HepG2 (cell line): ENCODE measurements at regions of chr3 and their contacts with region 1.

Region 1: DNA sequence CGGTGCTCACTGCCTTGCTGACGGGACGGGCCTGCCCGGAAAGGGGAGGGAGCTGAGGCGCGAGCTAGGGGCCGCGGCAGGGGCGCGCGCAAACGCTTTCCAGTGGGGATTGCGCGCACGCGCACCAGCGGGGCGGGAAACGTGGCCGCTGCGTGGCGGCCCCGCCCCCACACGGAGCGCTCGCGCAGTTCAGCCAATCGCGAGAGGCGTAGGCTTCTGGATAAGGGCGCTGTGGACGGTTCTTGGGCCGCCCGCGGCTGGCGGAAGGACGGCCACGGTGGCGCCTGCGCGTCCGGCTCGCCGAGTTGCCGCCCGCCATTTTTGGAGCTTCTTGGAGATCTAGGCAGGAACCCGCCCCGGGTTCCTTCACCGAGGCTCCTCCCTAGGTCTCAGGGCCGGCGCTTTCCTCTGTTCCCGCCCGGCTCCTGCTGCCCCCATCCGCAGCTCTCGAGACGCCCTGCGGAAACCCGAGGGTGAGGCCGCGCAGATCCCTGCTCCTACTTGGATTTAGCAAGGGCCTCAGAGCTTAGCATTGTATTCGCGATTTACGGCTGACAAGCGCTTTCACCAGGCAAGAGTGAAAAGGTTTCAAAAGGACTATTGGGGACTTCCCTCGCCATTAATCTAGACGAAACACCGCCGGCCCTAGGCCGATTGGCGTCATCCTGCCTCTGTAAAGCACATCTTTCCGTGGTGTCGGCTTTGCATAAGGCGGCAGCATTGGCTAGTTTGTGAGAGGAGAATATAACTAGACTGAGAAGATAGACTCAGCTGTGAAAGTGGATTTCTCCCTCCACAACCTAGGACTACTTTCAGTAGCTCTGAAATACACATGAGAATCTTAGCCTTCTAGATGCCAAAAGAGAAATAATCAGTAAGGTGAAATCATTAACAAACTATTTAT is 496 bp upstream of the STAG1 start:
- DNase-seq: peak; percentile 93
- ATAC-seq: peak; percentile 94
- H3K4me3 ChIP-seq: peak overlapping the region; percentile 61 to 86 (median 81)
- H3K27ac ChIP-seq: peak overlapping the region; percentile 97
- H3K4me1 ChIP-seq: peaks cover 31% of the 10 kb centered on the region
- H3K27me3 ChIP-seq: no peaks in the 10 kb centered on the region
- CTCF ChIP-seq: 0 out of 2 replicates have a peak, but pooled peaks have one; percentile 44
- EP300 ChIP-seq: 0 out of 4 replicates have a peak, but pooled peaks of 1 of the 2 experiments have one; percentile 7
- POLR2A ChIP-seq: peak; percentile 73 to 95; a peak in 3 of 4 replicates
- RAD21 ChIP-seq: no peak; the same call in 1 of the 2 replicates

Region 2: DNA sequence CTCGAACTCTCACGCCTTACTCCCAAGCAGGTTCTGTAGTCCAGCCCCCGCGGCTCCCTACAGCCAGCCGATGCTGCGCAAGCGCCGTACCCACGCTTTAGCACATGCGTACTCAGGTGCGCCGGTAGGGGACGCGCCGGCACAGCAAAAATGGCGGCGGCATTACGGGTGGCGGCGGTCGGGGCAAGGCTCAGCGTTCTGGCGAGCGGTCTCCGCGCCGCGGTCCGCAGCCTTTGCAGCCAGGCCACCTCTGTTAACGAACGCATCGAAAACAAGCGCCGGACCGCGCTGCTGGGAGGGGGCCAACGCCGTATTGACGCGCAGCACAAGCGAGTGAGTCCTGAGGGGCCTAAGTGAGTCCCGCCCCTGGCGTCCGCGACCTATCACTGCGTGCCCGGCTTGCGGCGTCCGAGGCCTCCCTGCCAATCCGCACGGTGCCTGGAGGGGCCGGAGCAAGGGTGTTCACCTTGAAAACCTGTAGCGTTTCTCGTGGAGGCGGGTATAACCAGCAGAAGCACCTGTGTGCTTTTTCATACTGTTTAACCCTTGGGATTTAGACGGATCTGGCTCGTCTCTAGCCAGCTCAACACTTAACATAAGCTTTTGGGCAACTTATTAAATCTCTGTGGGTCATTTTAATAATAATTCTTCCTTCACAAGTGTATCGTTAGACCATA is 502.3 kb before region 1 on chr3 and contains the start of gene PCCB:
- CTCF ChIA-PET with region 1: no interaction called
- POLR2A ChIA-PET with region 1: interaction called, 10 read pairs
- in situ Hi-C with region 1: no loop called
- intact Hi-C with region 1: loop called (anchors 5 kb)
- DNase-seq: peak; percentile 93
- ATAC-seq: peak; percentile 96
- H3K4me3 ChIP-seq: peak within 1 kb of the TSS; percentile 54 to 77 (median 72)
- H3K27ac ChIP-seq: peak within 1 kb of the TSS; percentile 95
- H3K4me1 ChIP-seq: peaks cover 66% of the 10 kb centered on the region
- H3K27me3 ChIP-seq: no peaks in the 10 kb centered on the region
- CTCF ChIP-seq: peak; percentile 95
- EP300 ChIP-seq: no peak
- POLR2A ChIP-seq: peak; percentile 82 to 87
- RAD21 ChIP-seq: peak; percentile 77
- total RNA-seq, gene PCCB: 88.7 and 92.6 TPM in 2 replicates

Region 3: GRCh38 chr3:136396916-136397315 is 355.8 kb before region 1 on chr3:
- CTCF ChIA-PET with region 1: interaction called, 11 read pairs
- POLR2A ChIA-PET with region 1: interaction called, 15 read pairs
- in situ Hi-C with region 1: loop called (anchors 10 kb)
- intact Hi-C with region 1: no loop called
- DNase-seq: no peak
- ATAC-seq: no peak
- H3K4me3 ChIP-seq: no peak overlapping the region
- H3K27ac ChIP-seq: no peak overlapping the region
- H3K4me1 ChIP-seq: no peaks in the 10 kb centered on the region
- H3K27me3 ChIP-seq: no peaks in the 10 kb centered on the region
- CTCF ChIP-seq: no peak
- EP300 ChIP-seq: no peak
- POLR2A ChIP-seq: no peak
- RAD21 ChIP-seq: no peak

Region 4: DNA sequence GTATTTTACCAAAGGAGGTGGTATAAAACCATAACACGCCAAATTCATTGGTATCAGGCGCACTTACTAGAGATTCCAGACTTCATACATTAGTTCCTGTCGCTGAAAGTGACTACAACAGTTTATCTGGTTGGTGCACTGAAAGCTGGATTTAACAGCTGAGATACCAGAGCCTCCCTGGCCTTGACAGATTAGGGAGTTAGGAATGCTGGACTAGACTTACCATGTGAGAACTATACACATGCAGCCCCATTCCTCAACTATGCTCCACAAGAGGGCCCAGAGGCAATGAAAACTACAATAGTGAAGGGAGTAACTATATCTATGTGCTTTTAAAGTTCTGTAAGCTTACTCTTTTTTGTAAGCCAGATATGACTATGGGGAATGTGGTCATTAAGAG is 174.9 kb before region 1 on chr3:
- CTCF ChIA-PET with region 1: no interaction called
- POLR2A ChIA-PET with region 1: interaction called, 13 read pairs
- in situ Hi-C with region 1: loop called (anchors 25 kb)
- intact Hi-C with region 1: no loop called
- DNase-seq: peak; percentile 17
- ATAC-seq: peak; percentile 70
- H3K4me3 ChIP-seq: no peak overlapping the region
- H3K27ac ChIP-seq: no peak overlapping the region
- H3K4me1 ChIP-seq: peaks cover 27% of the 10 kb centered on the region
- H3K27me3 ChIP-seq: no peaks in the 10 kb centered on the region
- CTCF ChIP-seq: no peak
- EP300 ChIP-seq: no peak
- POLR2A ChIP-seq: no peak
- RAD21 ChIP-seq: no peak

Region 5: GRCh38 chr3:136714020-136714419 is 38.7 kb before region 1 on chr3:
- CTCF ChIA-PET with region 1: no interaction called
- POLR2A ChIA-PET with region 1: no interaction called
- in situ Hi-C with region 1: no loop called
- intact Hi-C with region 1: no loop called
- DNase-seq: no peak
- ATAC-seq: no peak
- H3K4me3 ChIP-seq: no peak overlapping the region
- H3K27ac ChIP-seq: no peak overlapping the region
- H3K4me1 ChIP-seq: peaks cover 23% of the 10 kb centered on the region
- H3K27me3 ChIP-seq: no peaks in the 10 kb centered on the region
- CTCF ChIP-seq: no peak
- EP300 ChIP-seq: no peak
- POLR2A ChIP-seq: no peak
- RAD21 ChIP-seq: no peak

Region 6: DNA sequence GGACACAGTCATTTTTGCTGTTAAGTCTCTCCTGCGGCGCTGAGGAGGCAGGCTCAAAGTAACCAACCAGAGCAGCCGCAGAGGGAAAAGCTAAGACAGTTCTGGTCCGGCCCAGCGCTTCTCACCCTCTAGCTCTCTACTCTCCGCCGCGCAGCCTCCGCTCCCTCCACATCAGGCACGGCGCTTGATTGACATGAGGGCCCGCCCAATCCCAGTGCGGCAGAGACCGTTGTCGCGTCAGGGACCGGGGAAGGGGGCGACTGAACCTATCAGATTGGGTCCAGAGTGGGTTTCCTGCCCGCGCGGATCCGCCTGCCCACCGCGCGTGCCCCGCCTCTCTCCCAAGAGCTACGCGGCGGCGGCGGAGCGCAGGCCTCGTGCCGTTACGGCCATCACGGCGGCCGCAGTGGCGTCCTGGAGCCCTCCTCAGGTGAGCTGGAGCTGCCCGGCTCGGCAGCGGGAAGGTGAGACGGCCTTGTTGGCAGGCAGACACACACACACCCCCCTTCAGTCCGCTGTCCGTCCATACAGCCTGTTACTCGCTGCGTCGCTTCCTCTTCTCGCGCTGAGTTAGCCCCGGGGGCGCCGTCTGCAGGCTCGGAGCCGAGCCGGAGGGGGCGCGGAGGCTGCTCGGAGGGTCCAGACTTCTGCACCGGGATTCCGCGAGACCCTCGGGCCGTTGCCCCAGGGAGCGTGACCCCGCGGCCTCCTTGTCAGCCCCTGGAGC is 109.4 kb after region 1 on chr3 and contains the start of gene NCK1:
- CTCF ChIA-PET with region 1: no interaction called
- POLR2A ChIA-PET with region 1: interaction called, 39 read pairs
- in situ Hi-C with region 1: no loop called
- intact Hi-C with region 1: loop called (anchors 2 kb)
- DNase-seq: peak; percentile 95
- ATAC-seq: peak; percentile 97
- H3K4me3 ChIP-seq: peak within 1 kb of the TSS; percentile 79 to 88 (median 87)
- H3K27ac ChIP-seq: peak within 1 kb of the TSS; percentile 90
- H3K4me1 ChIP-seq: peaks cover 29% of the 10 kb centered on the region
- H3K27me3 ChIP-seq: no peaks in the 10 kb centered on the region; a peak in 1 of 5 replicates
- CTCF ChIP-seq: peak; percentile 52
- EP300 ChIP-seq: no peak
- POLR2A ChIP-seq: peak; percentile 91 to 97
- RAD21 ChIP-seq: no peak
- total RNA-seq, gene NCK1: 30.4 and 51.0 TPM in 2 replicates

Region 7: DNA sequence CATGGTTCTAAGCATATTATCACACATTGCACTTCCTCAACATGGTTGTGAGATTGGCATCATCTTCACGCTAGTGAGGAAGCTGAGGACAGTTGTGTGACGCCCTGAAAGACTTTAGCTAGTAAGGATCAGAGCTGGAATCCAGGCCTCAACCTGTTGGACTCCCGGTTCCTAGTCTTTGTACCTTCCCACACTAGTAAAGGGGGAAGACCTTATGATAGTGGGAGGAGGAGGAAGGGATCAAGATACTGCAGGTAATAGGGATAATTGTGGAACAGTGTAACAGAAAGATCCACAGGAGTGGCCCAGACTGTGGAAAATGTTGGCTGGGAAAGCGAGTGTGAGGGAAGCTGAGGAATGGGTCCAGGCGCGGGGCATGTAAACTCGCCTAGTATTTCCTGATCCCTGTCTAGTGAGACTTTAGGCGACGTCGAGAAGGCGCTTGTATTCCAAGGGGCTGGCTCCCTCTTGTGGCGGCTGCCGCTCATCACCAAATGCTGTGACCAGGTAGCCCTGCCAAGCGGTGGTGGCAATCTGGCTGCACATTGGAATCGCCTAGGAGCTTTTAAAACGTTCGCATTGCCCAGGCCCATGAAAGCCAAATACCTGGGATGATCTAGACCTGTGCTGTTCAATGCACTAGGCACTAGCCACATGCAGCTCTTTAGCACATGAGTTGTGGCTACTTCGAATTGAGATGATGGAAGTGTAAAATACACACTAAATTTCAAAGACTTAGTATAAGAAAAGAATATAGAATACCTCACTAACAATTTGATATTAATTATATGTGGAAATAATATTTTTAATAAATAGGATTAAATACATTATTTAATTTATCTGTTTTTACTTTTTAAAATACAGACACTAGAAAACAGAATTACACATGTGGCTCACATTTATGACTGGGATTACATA is 1218.5 kb after region 1 on chr3:
- CTCF ChIA-PET with region 1: no interaction called
- POLR2A ChIA-PET with region 1: no interaction called
- in situ Hi-C with region 1: no loop called
- intact Hi-C with region 1: no loop called
- DNase-seq: peak; percentile 43
- ATAC-seq: peak; percentile 100
- H3K4me3 ChIP-seq: no peak overlapping the region
- H3K27ac ChIP-seq: no peak overlapping the region
- H3K4me1 ChIP-seq: no peaks in the 10 kb centered on the region
- H3K27me3 ChIP-seq: 0 out of 5 replicates have a peak, but pooled peaks cover 0 to 4% of the 10 kb centered on the region in 2 experiments
- CTCF ChIP-seq: peak; percentile 92
- EP300 ChIP-seq: no peak
- POLR2A ChIP-seq: no peak
- RAD21 ChIP-seq: peak; percentile 68